Calu3 (cell line): ENCODE measurements at regions of chr14 and their contacts with region 1.

Region 1: DNA sequence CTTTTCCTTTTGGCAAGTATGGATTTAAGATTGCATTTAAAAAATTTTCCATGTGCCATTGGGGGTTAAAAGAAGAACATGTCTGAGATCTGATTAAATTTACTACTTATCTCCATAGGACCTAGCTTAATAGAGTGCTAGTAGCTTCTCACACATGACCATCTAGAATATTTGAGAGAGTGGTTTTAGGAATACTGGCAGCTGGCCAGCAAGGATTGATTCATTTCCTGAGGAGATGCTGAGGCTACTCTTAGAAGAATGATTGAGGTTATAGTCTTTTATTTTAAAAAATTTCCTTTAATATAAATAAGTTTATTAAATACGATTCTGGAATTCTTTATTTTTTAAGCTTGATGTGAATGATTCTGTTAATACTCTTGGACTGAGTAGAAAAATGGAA is 56.2 kb downstream of the MIPOL1 start:
- DNase-seq: peak; percentile 55
- H3K4me3 Mint-ChIP-seq: no peak overlapping the region
- H3K27ac Mint-ChIP-seq: no peak overlapping the region
- H3K4me1 Mint-ChIP-seq: peaks cover 15% of the 10 kb centered on the region
- H3K27me3 Mint-ChIP-seq: no peaks in the 10 kb centered on the region
- CTCF ChIP-seq: no peak

Region 2: DNA sequence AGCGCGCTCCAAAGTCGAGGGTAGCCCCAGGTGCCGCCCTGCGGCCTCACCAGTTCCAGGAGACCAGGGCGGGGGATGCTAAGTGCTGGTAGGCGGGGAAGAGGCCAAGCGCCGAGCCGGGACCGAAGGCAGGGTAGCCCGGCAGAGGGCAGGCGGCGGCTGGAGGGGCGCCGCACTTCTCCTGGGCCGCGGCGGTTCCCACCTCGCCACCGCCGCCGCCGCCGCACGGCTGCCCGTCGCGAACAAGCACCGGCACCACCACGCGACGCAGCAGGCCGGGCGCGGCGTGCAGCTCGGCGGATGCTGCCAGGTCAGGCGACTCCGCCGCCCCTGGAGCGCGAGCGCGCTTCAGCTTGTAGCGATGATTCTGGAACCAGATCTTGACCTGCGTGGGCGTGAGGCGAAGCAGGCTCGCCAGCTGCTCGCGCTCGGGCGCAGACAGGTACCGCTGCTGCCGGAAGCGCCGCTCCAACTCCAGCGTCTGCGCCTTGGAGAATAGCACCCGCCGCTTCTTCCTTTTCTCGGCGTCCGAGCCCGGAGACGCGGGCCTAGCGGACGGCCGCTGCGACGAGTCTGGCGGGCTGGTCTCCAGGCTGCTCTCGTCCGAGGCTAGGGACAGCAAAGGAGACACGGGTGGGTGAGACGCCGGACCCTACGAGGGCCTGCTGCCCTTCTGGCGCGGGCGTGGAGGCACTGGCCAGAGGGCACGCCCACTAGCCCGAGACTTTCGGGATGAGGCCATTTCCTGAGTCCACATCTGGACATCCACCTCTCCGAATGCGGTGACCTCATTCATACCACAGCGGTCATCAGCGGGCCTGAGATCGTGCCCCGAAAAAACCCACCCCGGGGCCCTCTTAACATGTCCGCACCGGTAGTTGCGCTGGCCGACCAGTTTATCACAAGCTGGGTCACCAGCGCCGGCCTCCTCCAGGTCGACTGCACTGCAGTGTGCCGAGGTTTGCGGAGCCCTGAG is 672.8 kb before region 1 on chr14:
- CTCF ChIA-PET with region 1: no interaction called
- intact Hi-C with region 1: no loop called
- DNase-seq: peak; percentile 49
- H3K4me3 Mint-ChIP-seq: peak overlapping the region; percentile 80
- H3K27ac Mint-ChIP-seq: no peak overlapping the region
- H3K4me1 Mint-ChIP-seq: no peaks in the 10 kb centered on the region
- H3K27me3 Mint-ChIP-seq: peaks cover 27% of the 10 kb centered on the region
- CTCF ChIP-seq: no peak

Region 3: DNA sequence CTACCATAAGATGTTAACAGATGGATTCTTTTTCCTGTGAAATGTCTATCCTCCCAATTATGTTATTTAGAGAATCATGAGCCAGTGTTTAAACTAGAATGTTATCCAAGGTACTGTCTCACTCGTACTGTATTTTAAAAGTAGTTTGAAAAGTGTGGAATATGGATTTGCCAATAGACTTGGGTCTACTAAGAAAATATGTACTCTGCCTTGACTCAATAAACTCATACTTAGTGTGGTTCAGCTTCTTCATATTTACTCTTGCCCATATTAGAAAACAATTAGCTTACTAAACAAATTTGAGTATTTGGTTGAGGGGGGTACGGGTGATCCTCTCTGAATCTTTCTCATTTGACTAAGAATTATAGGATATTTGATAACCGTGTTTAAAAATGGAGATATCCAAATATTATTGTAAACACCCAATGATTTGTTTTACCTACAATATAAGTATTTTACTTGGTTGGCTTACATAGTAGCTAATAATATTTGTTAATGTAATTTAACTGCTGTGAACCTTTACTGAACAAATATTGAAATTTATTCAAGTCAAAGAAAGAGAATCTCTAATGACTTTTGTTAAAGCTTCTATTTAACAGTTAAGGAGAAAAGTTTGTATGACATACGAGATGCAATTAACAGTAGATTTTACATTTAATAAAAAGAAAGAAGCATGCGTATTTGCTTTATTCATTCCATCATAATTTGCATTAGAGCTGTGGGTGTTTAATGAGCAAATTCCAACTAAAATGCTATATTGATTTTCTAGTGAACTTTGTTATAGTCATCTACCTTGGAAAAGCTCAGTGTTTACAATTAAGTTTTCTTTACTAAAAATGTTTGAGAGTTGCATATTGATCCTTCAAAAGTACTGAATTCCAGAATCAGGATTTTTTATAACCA is 25.0 kb after region 1 on chr14:
- CTCF ChIA-PET with region 1: no interaction called
- intact Hi-C with region 1: no loop called
- DNase-seq: no peak
- H3K4me3 Mint-ChIP-seq: no peak overlapping the region
- H3K27ac Mint-ChIP-seq: no peak overlapping the region
- H3K4me1 Mint-ChIP-seq: no peaks in the 10 kb centered on the region
- H3K27me3 Mint-ChIP-seq: no peaks in the 10 kb centered on the region
- CTCF ChIP-seq: no peak

Region 4: GRCh38 chr14:37329189-37330001 is 75.5 kb after region 1 on chr14:
- CTCF ChIA-PET with region 1: no interaction called
- intact Hi-C with region 1: loop called (anchors 5 kb)
- DNase-seq: no peak
- H3K4me3 Mint-ChIP-seq: peak overlapping the region; percentile 8
- H3K27ac Mint-ChIP-seq: peak overlapping the region; percentile 56
- H3K4me1 Mint-ChIP-seq: peaks cover 18% of the 10 kb centered on the region
- H3K27me3 Mint-ChIP-seq: no peaks in the 10 kb centered on the region
- CTCF ChIP-seq: no peak

Region 5: DNA sequence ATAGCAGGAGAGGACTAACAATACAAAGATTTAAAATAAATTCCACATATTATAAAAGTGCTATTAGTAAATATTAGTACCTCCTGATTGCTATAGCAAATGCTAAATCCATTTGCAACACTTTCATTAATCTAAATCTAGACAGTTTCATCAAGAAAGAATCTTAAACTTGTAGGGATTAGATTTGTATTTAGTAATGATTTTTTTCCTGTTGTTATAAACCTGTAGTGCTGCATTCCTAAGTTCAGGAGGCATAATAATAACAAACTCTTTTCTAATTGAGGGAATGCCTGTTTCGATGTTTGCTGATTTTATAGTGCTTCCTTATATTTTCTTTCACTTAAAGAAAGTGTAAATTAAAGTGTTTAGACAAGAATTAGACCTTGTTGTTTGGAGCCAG is 175.0 kb after region 1 on chr14:
- CTCF ChIA-PET with region 1: no interaction called
- intact Hi-C with region 1: loop called (anchors 10 kb)
- DNase-seq: no peak
- H3K4me3 Mint-ChIP-seq: no peak overlapping the region
- H3K27ac Mint-ChIP-seq: peak overlapping the region; percentile 81
- H3K4me1 Mint-ChIP-seq: peaks cover 46% of the 10 kb centered on the region
- H3K27me3 Mint-ChIP-seq: no peaks in the 10 kb centered on the region
- CTCF ChIP-seq: no peak

Region 6: DNA sequence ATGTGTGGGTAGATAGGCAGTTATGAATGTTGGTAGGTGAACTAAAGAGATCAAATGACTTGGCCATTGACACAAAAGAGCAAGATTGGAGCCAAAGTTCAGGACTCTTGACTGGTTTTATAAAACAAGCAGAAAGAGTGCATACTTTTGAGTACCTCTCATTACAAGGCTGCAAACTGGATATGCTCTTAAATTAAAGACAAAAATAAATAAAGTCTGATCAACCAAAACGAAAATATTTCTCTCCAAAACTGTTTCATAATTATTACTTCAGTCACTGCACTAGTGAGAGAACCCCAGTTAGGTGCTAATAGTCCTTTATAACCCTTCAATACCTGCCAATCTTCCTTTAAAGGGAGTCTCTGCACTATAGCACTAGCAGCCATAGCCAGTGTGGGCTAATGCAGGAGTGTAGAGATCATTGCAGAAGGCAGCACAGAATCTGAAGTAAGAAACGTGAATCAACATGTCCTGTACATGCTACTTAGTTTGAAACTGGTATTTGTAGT is 194.0 kb after region 1 on chr14:
- CTCF ChIA-PET with region 1: no interaction called
- intact Hi-C with region 1: loop called (anchors 2 kb)
- DNase-seq: no peak
- H3K4me3 Mint-ChIP-seq: no peak overlapping the region
- H3K27ac Mint-ChIP-seq: peak overlapping the region; percentile 89
- H3K4me1 Mint-ChIP-seq: peaks cover 15% of the 10 kb centered on the region
- H3K27me3 Mint-ChIP-seq: no peaks in the 10 kb centered on the region
- CTCF ChIP-seq: no peak

Region 7: DNA sequence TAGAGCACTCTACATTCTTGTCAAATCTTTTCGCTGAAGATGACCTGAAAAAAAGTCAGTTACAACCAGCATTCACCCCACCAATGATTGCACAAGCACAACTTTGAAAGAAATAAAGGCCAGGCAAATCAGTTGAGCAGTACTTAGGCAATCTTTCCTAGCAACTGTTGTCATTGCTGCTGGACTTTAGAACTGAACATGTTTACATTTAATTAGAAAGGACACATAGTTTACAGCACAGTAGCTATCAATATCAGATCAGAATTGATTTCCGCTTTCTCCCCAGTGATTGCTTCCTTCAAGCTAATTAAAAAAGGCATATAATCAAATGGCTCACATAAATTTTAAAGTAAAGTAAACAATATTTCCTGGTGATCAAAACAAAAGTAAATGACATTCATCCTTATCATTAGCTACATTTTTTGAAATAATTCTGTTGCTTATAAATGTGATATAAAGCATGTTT is 212.8 kb after region 1 on chr14:
- CTCF ChIA-PET with region 1: no interaction called
- intact Hi-C with region 1: loop called (anchors 5 kb)
- DNase-seq: peak; percentile 29
- H3K4me3 Mint-ChIP-seq: no peak overlapping the region
- H3K27ac Mint-ChIP-seq: peak overlapping the region; percentile 45
- H3K4me1 Mint-ChIP-seq: peaks cover 10% of the 10 kb centered on the region
- H3K27me3 Mint-ChIP-seq: no peaks in the 10 kb centered on the region
- CTCF ChIP-seq: no peak

Region 8: DNA sequence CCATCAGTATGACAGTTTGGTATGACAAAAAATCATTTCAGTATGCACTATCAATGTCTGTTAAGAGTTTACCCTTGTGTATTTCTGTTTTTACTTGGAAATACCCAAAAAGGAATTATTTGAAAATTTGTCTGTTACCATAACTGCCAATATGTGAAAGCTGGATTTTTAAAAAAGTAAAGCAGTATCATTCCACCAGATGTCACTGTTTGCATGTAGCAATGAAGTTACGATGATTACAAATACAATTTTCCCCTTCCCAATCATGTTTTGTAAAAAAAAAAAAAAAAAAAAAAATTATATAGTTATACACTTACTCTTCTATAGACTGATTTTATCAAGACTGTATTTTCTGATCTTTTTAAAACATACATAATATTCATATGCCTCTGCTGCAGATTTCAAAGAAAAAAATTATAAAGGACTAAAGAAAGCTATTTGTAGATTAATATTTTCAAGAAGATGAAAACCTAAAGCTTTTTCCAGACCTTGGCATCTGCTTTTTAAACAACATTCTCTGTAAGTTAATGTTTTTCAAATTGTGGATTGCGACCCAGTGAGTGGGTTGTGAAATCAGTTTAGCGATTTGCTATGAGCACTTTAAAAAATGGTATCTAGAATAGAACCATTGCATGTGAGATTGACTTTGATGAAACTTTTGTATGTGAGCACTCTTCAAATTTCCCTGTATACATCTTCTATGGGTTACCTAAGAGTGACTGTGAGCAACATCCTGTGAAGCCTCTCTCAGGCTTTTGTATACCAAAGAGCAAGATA is 455.7 kb after region 1 on chr14:
- CTCF ChIA-PET with region 1: no interaction called
- intact Hi-C with region 1: loop called (anchors 5 kb)
- DNase-seq: no peak
- H3K4me3 Mint-ChIP-seq: no peak overlapping the region
- H3K27ac Mint-ChIP-seq: no peak overlapping the region
- H3K4me1 Mint-ChIP-seq: peaks cover 22% of the 10 kb centered on the region
- H3K27me3 Mint-ChIP-seq: no peaks in the 10 kb centered on the region
- CTCF ChIP-seq: peak; percentile 22